Activated B cell treated with CpG ODN at 0.5 μM for 24 hours (primary cell): ENCODE measurements at regions of chr2 and their contacts with region 1.

Region 1: GRCh38 chr2:45843136-45843535 is 191.7 kb downstream of the PRKCE start:
- DNase-seq: peak; percentile 54
- ATAC-seq: peak; percentile 95
- H3K4me3 Mint-ChIP-seq: peak overlapping the region; percentile 63
- H3K27ac Mint-ChIP-seq: peak overlapping the region; percentile 75
- H3K4me1 Mint-ChIP-seq: peaks cover 64% of the 10 kb centered on the region
- H3K27me3 Mint-ChIP-seq: no peaks in the 10 kb centered on the region
- CTCF ChIP-seq: no peak

Region 2: DNA sequence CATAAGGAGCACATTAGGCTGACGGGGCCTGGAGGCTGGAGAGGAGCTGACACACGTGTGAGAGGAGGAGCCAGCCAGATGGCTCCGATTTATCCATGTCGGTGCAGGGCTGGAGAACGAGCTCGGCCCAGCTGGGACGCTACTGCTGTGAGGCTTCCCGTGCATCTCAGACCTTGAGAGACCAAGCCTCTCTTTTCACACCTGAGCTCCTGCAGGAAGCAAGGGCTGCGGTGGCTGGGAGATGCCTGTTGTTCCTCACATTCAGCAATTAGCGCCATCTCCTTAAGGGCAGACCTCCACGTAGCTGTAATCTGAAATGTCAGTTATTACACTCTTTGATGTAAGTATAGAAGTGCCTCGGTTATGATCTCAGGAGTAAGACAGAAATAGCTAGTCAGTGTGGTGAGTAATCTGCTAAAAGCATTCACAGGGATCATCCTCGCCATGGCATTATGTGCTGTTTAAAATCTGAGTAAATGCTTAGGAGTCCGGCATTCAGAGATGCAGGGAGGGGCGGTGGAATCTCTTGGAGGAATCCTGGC is 83.8 kb before region 1 on chr2:
- CTCF ChIA-PET with region 1: no interaction called
- POLR2A ChIA-PET with region 1: no interaction called
- intact Hi-C with region 1: no loop called
- DNase-seq: no peak
- ATAC-seq: no peak
- H3K4me3 Mint-ChIP-seq: no peak overlapping the region
- H3K27ac Mint-ChIP-seq: no peak overlapping the region
- H3K4me1 Mint-ChIP-seq: peaks cover 45% of the 10 kb centered on the region
- H3K27me3 Mint-ChIP-seq: no peaks in the 10 kb centered on the region
- CTCF ChIP-seq: no peak

Region 3: DNA sequence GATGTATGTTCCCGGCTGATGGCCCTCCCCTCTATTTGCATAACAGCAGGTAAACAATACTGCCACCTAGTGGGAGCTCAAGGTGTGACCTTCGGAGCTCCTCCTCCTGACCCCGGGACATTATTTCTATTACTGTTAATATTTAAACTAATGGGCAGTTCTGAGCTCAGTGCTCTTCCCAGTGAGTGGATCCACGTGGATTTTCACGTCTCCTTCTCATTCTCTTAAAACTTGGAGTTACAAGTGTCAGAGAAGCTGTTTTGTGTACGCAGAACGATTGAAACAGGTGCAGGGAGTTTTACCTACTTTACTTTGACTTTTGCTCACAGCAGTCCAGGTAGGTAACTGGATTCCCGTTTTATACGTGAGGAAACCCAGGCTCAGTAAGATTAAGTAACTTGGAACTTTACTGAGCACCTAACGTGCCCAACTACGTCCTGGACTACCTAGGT is 64.4 kb before region 1 on chr2:
- CTCF ChIA-PET with region 1: interaction called, 4 read pairs
- POLR2A ChIA-PET with region 1: no interaction called
- intact Hi-C with region 1: loop called (anchors 5 kb)
- DNase-seq: peak; percentile 35
- ATAC-seq: peak; percentile 83
- H3K4me3 Mint-ChIP-seq: peak overlapping the region; percentile 44
- H3K27ac Mint-ChIP-seq: peak overlapping the region; percentile 39
- H3K4me1 Mint-ChIP-seq: peaks cover 76% of the 10 kb centered on the region
- H3K27me3 Mint-ChIP-seq: no peaks in the 10 kb centered on the region
- CTCF ChIP-seq: no peak

Region 4: GRCh38 chr2:45821564-45822271 is 21.4 kb before region 1 on chr2:
- CTCF ChIA-PET with region 1: no interaction called
- POLR2A ChIA-PET with region 1: no interaction called
- intact Hi-C with region 1: no loop called
- DNase-seq: no peak
- ATAC-seq: no peak
- H3K4me3 Mint-ChIP-seq: no peak overlapping the region
- H3K27ac Mint-ChIP-seq: peak overlapping the region; percentile 15
- H3K4me1 Mint-ChIP-seq: peaks cover 67% of the 10 kb centered on the region
- H3K27me3 Mint-ChIP-seq: no peaks in the 10 kb centered on the region
- CTCF ChIP-seq: no peak

Region 5: GRCh38 chr2:45860136-45861121 is 17.3 kb after region 1 on chr2:
- CTCF ChIA-PET with region 1: interaction called, 4 read pairs
- POLR2A ChIA-PET with region 1: no interaction called
- intact Hi-C with region 1: loop called (anchors 2 kb)
- DNase-seq: no peak
- ATAC-seq: peak; percentile 52
- H3K4me3 Mint-ChIP-seq: peak overlapping the region; percentile 84
- H3K27ac Mint-ChIP-seq: peak overlapping the region; percentile 81
- H3K4me1 Mint-ChIP-seq: peaks cover 39% of the 10 kb centered on the region
- H3K27me3 Mint-ChIP-seq: no peaks in the 10 kb centered on the region
- CTCF ChIP-seq: no peak